ENCODE measurements at regions of chr7 and their contacts with region 1.

Region 1: GRCh38 chr7:108030516-108030915 is 27.6 kb upstream of the LAMB1 start:
- DNase-seq: no peak
- ATAC-seq: no peak
- H3K4me3 ChIP-seq: no peak overlapping the region
- H3K27ac ChIP-seq: peak overlapping the region in 1 of 2 donors; percentile 44
- H3K4me1 ChIP-seq: peaks cover 2 to 6% of the 10 kb centered on the region in 2 donors
- H3K27me3 ChIP-seq: no peaks in the 10 kb centered on the region

Region 2: DNA sequence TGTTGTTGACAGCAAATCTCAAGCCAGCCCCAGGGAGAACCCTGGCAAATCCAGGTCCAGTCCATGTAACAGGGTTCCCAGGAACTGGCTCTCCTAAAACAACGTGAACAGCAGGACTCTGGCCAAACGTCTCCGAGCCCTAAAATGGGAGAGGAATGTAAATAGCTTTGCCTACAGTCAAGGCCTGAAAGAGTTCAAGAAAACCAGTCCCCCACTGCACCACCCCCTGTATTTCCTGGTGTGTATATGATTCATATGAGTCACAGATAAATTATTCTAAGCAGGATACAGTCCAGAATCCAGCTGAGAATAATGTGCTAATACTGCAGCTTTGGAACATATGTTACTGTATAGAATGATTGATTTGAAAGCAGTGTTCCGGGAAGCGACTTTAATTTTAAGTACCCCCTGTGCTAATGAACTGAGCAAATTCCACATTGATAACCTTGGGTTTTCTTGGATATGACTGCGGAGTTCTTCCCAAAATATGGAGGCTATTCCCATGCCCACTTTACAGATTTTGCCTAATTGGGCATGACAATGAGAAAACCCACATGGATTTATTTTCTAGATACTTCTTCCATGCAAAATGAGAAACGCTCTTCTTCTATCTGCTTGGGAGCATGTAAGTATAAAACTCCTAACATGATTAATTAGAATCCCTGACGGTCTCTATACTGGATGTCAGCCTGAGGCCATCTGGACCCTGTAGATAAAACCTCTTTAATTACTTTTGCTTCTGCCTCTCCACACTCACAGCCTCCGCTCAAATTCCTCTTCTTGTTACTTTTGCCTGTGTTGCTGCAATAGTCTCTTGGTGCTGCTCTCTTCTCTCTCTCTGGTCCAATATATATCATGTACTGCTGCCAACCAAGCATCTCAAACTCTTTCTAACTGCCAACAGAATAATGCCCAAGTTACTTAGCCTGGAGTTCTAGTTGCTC is 49.4 kb after region 1 on chr7:
- intact Hi-C with region 1: loop called in 1 of 2 experiments (anchors 5 kb)
- DNase-seq: no peak
- ATAC-seq: no peak
- H3K4me3 ChIP-seq: no peak overlapping the region
- H3K27ac ChIP-seq: no peak overlapping the region
- H3K4me1 ChIP-seq: no peaks in the 10 kb centered on the region
- H3K27me3 ChIP-seq: no peaks in the 10 kb centered on the region